Activated naive CD4-positive, alpha-beta T cell treated with anti-CD3 and anti-CD28 coated beads for 36 hours (primary cell): ENCODE measurements at regions of chr1 and their contacts with region 1.

Region 1: GRCh38 chr1:233790662-233791375 is 113.7 kb upstream of the SLC35F3 start:
- DNase-seq: peak; percentile 38
- H3K4me3 Mint-ChIP-seq: no peak overlapping the region
- H3K27ac Mint-ChIP-seq: no peak overlapping the region
- H3K4me1 Mint-ChIP-seq: no peaks in the 10 kb centered on the region
- H3K27me3 Mint-ChIP-seq: peaks cover 22% of the 10 kb centered on the region

Region 2: GRCh38 chr1:233304489-233305102 is 486.2 kb before region 1 on chr1:
- CTCF ChIA-PET with region 1: interaction called, 3 read pairs
- intact Hi-C with region 1: loop called (anchors 1 kb)
- DNase-seq: no peak
- H3K4me3 Mint-ChIP-seq: no peak overlapping the region
- H3K27ac Mint-ChIP-seq: no peak overlapping the region
- H3K4me1 Mint-ChIP-seq: no peaks in the 10 kb centered on the region
- H3K27me3 Mint-ChIP-seq: peaks cover 4% of the 10 kb centered on the region

Region 3: GRCh38 chr1:233394860-233395717 is 395.7 kb before region 1 on chr1:
- CTCF ChIA-PET with region 1: interaction called, 3 read pairs
- intact Hi-C with region 1: loop called (anchors 1 kb)
- DNase-seq: peak; percentile 35
- H3K4me3 Mint-ChIP-seq: no peak overlapping the region
- H3K27ac Mint-ChIP-seq: no peak overlapping the region
- H3K4me1 Mint-ChIP-seq: no peaks in the 10 kb centered on the region
- H3K27me3 Mint-ChIP-seq: peaks cover 36% of the 10 kb centered on the region

Region 4: DNA sequence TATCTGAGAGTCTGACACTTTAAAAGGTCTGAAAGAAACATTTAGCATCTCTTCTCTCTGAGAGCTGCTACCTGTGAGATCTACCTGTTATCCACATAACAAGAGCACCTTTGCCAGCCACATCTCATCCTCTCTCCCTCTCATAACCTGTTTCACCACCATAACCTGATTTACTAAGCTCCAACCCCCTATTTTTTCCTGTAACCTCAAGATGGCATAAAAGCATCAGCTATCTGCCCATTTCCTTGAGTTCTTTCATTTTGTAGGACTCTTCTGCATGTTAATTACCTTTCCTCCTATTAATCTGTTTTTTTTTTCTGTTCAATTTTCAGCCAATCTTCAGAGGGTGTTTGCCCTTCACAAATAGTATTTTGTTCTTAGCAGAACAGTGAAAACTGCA is 313.5 kb before region 1 on chr1:
- CTCF ChIA-PET with region 1: no interaction called
- intact Hi-C with region 1: loop called (anchors 1 kb)
- DNase-seq: no peak
- H3K4me3 Mint-ChIP-seq: no peak overlapping the region
- H3K27ac Mint-ChIP-seq: no peak overlapping the region
- H3K4me1 Mint-ChIP-seq: no peaks in the 10 kb centered on the region
- H3K27me3 Mint-ChIP-seq: peaks cover 26% of the 10 kb centered on the region

Region 5: GRCh38 chr1:233904633-233905415 is 114.0 kb after region 1 on chr1 and contains the start of gene SLC35F3:
- CTCF ChIA-PET with region 1: no interaction called
- intact Hi-C with region 1: no loop called
- DNase-seq: no peak
- H3K4me3 Mint-ChIP-seq: peak within 1 kb of the TSS; percentile 27
- H3K27ac Mint-ChIP-seq: no peak within 1 kb of the TSS
- H3K4me1 Mint-ChIP-seq: peaks cover 8% of the 10 kb centered on the region
- H3K27me3 Mint-ChIP-seq: peaks cover 58% of the 10 kb centered on the region
- total RNA-seq, gene SLC35F3: not detected

Region 6: GRCh38 chr1:234065794-234066447 is 275.1 kb after region 1 on chr1:
- CTCF ChIA-PET with region 1: interaction called, 3 read pairs
- intact Hi-C with region 1: loop called (anchors 5 kb)
- DNase-seq: peak; percentile 83
- H3K4me3 Mint-ChIP-seq: no peak overlapping the region
- H3K27ac Mint-ChIP-seq: no peak overlapping the region
- H3K4me1 Mint-ChIP-seq: no peaks in the 10 kb centered on the region
- H3K27me3 Mint-ChIP-seq: peaks cover 5% of the 10 kb centered on the region

Region 7: DNA sequence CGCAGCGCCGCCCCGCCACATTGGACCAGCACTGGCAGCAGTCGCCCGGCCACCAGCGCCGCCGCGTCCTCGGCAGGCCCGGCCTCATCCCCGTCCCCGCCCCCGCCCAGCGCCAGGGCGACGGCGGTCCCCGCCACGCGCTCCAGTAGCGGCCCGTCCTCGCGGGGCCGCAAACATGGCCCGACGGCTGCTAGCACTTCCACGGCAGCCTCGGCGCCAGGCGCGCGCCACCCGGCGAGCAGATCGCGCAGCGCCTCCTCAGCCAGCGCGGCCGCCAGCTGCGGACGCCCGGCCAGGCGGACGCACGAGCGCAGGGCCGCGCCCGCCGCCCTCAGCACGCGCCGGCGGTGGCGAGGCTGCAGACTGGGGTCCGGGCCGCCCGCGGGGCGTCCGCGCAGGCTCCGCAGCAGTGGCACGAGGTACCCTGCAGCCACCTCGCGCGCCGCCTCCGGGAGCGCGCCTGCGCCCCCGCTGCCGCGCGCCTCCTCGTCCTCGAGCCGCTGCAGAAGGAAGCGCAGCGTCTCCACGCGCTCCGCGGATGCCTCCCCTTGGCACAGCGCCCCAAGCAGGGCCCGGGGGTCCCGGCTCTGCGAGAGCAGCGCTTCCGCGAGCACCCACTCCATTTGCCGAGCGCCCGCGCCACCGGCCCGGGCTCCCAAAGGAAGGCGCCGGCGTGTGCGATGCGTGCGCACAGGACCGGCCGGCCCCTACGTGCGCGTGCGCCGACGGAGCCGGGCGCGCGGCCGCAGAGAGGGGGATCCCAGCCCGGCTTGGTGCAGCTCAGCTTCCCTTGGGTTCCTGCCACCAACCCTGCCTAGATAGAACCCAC is 687.9 kb after region 1 on chr1 and contains the start of gene TARBP1:
- CTCF ChIA-PET with region 1: no interaction called
- intact Hi-C with region 1: no loop called
- DNase-seq: peak; percentile 77
- H3K4me3 Mint-ChIP-seq: peak within 1 kb of the TSS; percentile 79
- H3K27ac Mint-ChIP-seq: peak within 1 kb of the TSS; percentile 46
- H3K4me1 Mint-ChIP-seq: peaks cover 49% of the 10 kb centered on the region
- H3K27me3 Mint-ChIP-seq: peaks cover 12% of the 10 kb centered on the region
- total RNA-seq, gene TARBP1: 40.2 to 41.6 TPM